ENCODE measurements at regions of chr1 and their contacts with region 1.

Region 1: DNA sequence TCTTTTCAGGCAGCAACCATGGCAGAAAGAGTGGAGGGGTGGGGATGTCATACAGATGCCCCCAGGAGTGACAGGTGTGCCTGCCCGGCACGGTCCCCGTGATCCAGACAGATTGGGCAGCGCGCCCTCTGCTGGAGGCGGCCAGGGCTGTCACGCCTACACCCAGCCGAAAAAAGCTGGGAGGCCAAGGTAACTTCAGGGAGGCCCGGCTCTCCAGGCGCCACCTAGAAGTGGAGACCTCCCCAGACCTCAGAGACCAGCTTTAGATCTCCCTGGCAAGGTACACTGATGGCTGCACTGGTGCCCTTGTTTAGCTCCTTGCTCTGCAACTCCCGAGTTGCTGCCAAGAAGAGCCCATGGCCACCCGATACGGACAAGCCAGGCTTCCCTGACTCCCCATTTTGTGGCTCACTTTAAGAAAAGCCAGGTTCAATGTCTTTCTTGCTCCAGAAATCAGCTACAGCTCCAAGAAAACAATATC is 6.6 kb downstream of the GOLT1A start:
- DNase-seq: peak; percentile 76
- H3K4me3 Mint-ChIP-seq: no peak overlapping the region
- H3K27ac Mint-ChIP-seq: no peak overlapping the region
- H3K4me1 Mint-ChIP-seq: no peaks in the 10 kb centered on the region
- H3K27me3 Mint-ChIP-seq: peaks cover 38% of the 10 kb centered on the region
- CTCF ChIP-seq: peak; percentile 99

Region 2: GRCh38 chr1:202750758-202751157 is 1456.4 kb before region 1 on chr1:
- CTCF ChIA-PET with region 1: no interaction called
- POLR2A ChIA-PET with region 1: no interaction called
- intact Hi-C with region 1: no loop called
- DNase-seq: peak; percentile 12
- H3K4me3 Mint-ChIP-seq: no peak overlapping the region
- H3K27ac Mint-ChIP-seq: no peak overlapping the region
- H3K4me1 Mint-ChIP-seq: no peaks in the 10 kb centered on the region
- H3K27me3 Mint-ChIP-seq: no peaks in the 10 kb centered on the region
- CTCF ChIP-seq: peak; percentile 24

Region 3: DNA sequence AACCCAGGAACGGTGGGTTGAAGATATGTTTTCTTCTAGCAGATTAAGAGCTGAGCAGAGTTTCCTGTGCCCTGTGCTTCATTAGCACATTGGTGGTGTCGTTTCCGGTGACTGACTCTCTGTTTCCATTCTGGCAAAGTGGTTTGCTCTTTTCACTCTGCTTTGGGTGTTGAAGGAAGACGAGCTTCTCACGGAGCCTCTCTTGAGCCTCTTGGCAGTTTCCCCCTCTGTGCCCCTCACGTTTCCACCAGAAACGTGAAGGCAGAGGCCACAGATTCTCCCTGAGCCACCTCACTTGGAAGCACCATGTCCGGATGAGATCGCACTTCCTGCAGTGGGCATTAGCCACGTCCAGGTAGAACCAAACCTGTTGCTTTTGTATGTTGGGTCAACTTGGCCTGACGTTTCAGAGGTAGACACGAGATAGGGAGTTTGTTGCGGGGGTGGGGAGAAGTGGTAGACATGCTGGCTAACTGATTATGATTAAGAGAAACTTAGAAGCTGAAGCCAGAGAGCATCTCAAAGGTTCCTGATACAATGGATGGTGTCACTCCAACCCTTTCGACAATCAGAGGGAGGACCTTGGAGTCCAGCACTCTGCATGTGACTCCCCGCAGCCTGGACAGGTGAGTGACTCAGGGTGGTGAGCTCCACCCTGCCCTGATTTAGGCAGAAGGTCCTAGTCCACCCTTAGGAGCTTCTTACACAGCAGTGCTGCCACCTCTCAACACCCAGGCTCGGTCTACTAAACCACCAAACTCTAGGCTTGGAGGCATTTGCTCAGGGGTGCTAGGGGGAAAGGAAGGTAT is 441.9 kb before region 1 on chr1 and contains the start of gene LAX1:
- CTCF ChIA-PET with region 1: no interaction called
- POLR2A ChIA-PET with region 1: no interaction called
- intact Hi-C with region 1: no loop called
- DNase-seq: no peak
- H3K4me3 Mint-ChIP-seq: no peak within 1 kb of the TSS
- H3K27ac Mint-ChIP-seq: no peak within 1 kb of the TSS
- H3K4me1 Mint-ChIP-seq: peaks cover 26% of the 10 kb centered on the region
- H3K27me3 Mint-ChIP-seq: no peaks in the 10 kb centered on the region
- CTCF ChIP-seq: no peak
- total RNA-seq, gene LAX1: not detected in 2 replicates

Region 4: GRCh38 chr1:204051258-204051657 is 155.9 kb before region 1 on chr1:
- CTCF ChIA-PET with region 1: no interaction called
- POLR2A ChIA-PET with region 1: no interaction called
- intact Hi-C with region 1: no loop called
- DNase-seq: no peak
- H3K4me3 Mint-ChIP-seq: no peak overlapping the region
- H3K27ac Mint-ChIP-seq: no peak overlapping the region
- H3K4me1 Mint-ChIP-seq: no peaks in the 10 kb centered on the region
- H3K27me3 Mint-ChIP-seq: no peaks in the 10 kb centered on the region
- CTCF ChIP-seq: no peak

Region 5: GRCh38 chr1:204171751-204172178 is 35.4 kb before region 1 on chr1:
- CTCF ChIA-PET with region 1: interaction called, 505 read pairs
- POLR2A ChIA-PET with region 1: interaction called, 7 read pairs
- intact Hi-C with region 1: no loop called
- DNase-seq: peak; percentile 89
- H3K4me3 Mint-ChIP-seq: no peak overlapping the region
- H3K27ac Mint-ChIP-seq: no peak overlapping the region
- H3K4me1 Mint-ChIP-seq: peaks cover 7% of the 10 kb centered on the region
- H3K27me3 Mint-ChIP-seq: no peaks in the 10 kb centered on the region
- CTCF ChIP-seq: no peak

Region 6: GRCh38 chr1:204219971-204220608 is 12.9 kb after region 1 on chr1:
- CTCF ChIA-PET with region 1: interaction called, 65 read pairs
- POLR2A ChIA-PET with region 1: interaction called, 5 read pairs
- intact Hi-C with region 1: no loop called
- DNase-seq: no peak
- H3K4me3 Mint-ChIP-seq: no peak overlapping the region
- H3K27ac Mint-ChIP-seq: no peak overlapping the region
- H3K4me1 Mint-ChIP-seq: no peaks in the 10 kb centered on the region
- H3K27me3 Mint-ChIP-seq: no peaks in the 10 kb centered on the region
- CTCF ChIP-seq: no peak

Region 7: DNA sequence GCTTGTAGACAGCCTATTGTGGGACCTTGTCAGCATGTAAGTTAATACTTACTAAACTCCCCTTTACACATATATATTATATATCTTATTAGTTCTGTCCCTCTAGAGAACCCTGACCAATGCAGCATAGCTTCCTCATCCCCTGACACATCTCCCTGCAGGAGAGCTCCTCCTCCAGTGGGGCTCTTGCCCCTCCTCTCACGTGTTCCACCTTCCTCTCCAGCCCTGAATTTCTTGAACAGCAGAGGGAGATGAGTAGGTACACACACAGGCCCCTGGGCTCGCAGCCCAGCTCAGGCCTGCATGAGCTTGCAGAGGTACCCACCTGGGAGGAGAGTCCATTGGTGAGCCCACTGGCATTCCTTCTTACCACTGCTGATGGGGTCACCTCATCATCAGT is 33.9 kb after region 1 on chr1:
- CTCF ChIA-PET with region 1: interaction called, 17 read pairs
- POLR2A ChIA-PET with region 1: no interaction called
- intact Hi-C with region 1: no loop called
- DNase-seq: peak; percentile 20
- H3K4me3 Mint-ChIP-seq: no peak overlapping the region
- H3K27ac Mint-ChIP-seq: no peak overlapping the region
- H3K4me1 Mint-ChIP-seq: no peaks in the 10 kb centered on the region
- H3K27me3 Mint-ChIP-seq: no peaks in the 10 kb centered on the region
- CTCF ChIP-seq: no peak

Region 8: DNA sequence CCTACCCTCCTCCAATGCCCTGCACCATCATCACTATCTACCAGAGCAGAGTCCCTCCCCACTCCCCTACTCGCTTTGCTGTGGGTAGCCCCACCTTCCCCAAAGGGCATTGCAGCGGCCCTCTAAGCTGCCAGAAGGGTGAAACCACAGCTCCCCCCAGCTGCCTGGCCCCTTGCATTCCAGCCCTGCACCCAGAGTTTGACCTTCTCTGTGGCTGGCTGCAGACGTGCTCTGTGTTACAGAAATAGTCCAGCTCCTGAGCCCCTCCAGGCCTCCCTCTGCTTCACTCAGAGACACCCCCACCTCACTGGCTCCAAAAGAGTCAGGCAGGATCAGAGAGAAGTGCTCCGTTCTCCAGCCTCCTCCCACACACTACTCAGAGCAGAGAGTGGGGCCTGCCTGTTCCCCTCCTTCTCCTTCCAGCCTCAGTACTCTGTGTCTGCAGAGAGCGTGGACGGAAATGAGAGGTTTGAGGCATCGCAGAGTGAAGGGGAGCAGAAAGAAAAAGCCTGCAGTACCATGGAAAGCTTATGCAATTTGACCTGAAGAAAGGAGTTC is 89.3 kb after region 1 on chr1:
- CTCF ChIA-PET with region 1: interaction called, 10 read pairs
- POLR2A ChIA-PET with region 1: no interaction called
- intact Hi-C with region 1: no loop called
- DNase-seq: peak; percentile 62
- H3K4me3 Mint-ChIP-seq: peak overlapping the region; percentile 40
- H3K27ac Mint-ChIP-seq: peak overlapping the region; percentile 62
- H3K4me1 Mint-ChIP-seq: peaks cover 67% of the 10 kb centered on the region
- H3K27me3 Mint-ChIP-seq: no peaks in the 10 kb centered on the region
- CTCF ChIP-seq: no peak

Region 9: DNA sequence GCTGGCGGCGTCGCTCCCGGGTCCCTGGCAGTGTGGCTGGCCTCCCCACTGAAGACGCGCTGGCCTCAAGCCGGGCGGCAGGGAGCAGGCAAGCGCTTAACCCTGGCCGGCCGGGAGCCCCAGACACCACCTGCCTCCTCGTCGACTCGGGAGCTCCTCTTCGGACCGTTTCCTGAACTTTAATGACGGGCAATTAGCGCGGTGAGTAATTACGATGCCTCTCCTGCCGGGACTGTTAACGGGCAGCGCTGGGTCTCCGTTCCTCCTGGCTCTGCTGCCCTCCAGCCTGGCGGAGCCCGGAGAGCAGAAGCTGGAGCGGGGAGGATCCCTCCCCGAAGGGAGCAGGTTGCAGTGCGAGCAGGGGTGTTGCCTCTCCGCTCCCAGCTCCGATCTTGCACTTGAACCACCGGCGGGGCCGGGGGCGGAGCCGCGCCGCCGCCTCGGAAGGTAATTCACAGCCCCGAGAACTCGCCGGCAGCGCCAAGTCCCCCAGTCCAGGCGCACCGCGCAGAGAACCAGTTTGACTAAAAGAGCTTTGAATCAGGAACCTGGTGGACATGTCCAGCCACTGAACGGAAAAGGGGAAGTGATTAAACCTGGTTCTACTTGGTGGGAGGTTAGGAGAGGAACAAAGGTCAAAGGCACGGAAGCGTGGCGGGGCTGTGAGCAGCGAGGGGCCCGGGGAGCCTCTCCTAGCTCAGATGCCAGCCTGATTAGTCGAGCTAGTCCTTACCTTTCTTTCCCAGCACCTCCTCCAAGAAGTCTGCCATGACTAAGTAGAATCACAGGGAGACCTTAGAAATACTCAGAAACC is 170.8 kb after region 1 on chr1:
- CTCF ChIA-PET with region 1: interaction called, 13 read pairs
- POLR2A ChIA-PET with region 1: no interaction called
- intact Hi-C with region 1: no loop called
- DNase-seq: peak; percentile 46
- H3K4me3 Mint-ChIP-seq: peak overlapping the region; percentile 70
- H3K27ac Mint-ChIP-seq: no peak overlapping the region
- H3K4me1 Mint-ChIP-seq: peaks cover 5% of the 10 kb centered on the region
- H3K27me3 Mint-ChIP-seq: no peaks in the 10 kb centered on the region
- CTCF ChIP-seq: no peak

Region 10: GRCh38 chr1:204971517-204972336 is 764.6 kb after region 1 on chr1:
- CTCF ChIA-PET with region 1: no interaction called
- POLR2A ChIA-PET with region 1: no interaction called
- intact Hi-C with region 1: no loop called
- DNase-seq: peak; percentile 58
- H3K4me3 Mint-ChIP-seq: no peak overlapping the region
- H3K27ac Mint-ChIP-seq: no peak overlapping the region
- H3K4me1 Mint-ChIP-seq: peaks cover 8% of the 10 kb centered on the region
- H3K27me3 Mint-ChIP-seq: peaks cover 80% of the 10 kb centered on the region
- CTCF ChIP-seq: no peak

Measured in MCF 10A (cell line).